ENCODE measurements at regions of chr6 and their contacts with region 1.

Region 1: GRCh38 chr6:105272786-105273185 is 93.0 kb upstream of the POPDC3 start:
- DNase-seq: peak; percentile 67 to 79
- H3K4me3 ChIP-seq: no peak overlapping the region
- H3K27ac ChIP-seq: peak overlapping the region; percentile 3; the same call in 1 of the 2 replicates
- H3K4me1 ChIP-seq: peaks cover 21% of the 10 kb centered on the region
- H3K27me3 ChIP-seq: no peaks in the 10 kb centered on the region
- CTCF ChIP-seq: no peak

Region 2: GRCh38 chr6:105136431-105137350 is 136.1 kb before region 1 on chr6:
- CTCF ChIA-PET with region 1: no interaction called
- POLR2A ChIA-PET with region 1: no interaction called
- intact Hi-C with region 1: loop called (anchors 10 kb)
- DNase-seq: peak in 1 of 2 experiments; percentile 37
- H3K4me3 ChIP-seq: peak overlapping the region; percentile 83
- H3K27ac ChIP-seq: no peak overlapping the region
- H3K4me1 ChIP-seq: no peaks in the 10 kb centered on the region
- H3K27me3 ChIP-seq: 0 out of 2 replicates have a peak, but pooled peaks cover 6% of the 10 kb centered on the region
- CTCF ChIP-seq: no peak; the same call in 1 of the 2 replicates

Region 3: GRCh38 chr6:105179244-105180065 is 93.3 kb before region 1 on chr6 and contains the start of gene POPDC3:
- CTCF ChIA-PET with region 1: no interaction called
- POLR2A ChIA-PET with region 1: no interaction called
- intact Hi-C with region 1: loop called (anchors 10 kb)
- DNase-seq: peak; percentile 49 to 64
- H3K4me3 ChIP-seq: peak within 1 kb of the TSS; percentile 86
- H3K27ac ChIP-seq: peak within 1 kb of the TSS; percentile 94
- H3K4me1 ChIP-seq: peaks cover 30% of the 10 kb centered on the region
- H3K27me3 ChIP-seq: no peaks in the 10 kb centered on the region
- CTCF ChIP-seq: no peak
- total RNA-seq, gene POPDC3: 14.8 and 24.2 TPM in 2 replicates

Measured in PC-9 (cell line).